Natural killer cell (primary cell): ENCODE measurements at regions of chr1 and their contacts with region 1.

Region 1: GRCh38 chr1:173824331-173825081 is at the starts of genes CENPL and DARS2:
- DNase-seq: peak; percentile 81 to 96
- ATAC-seq: peak; percentile 84 to 93 (median 88)
- H3K4me3 ChIP-seq: peak within 1 kb of the TSS; percentile 94
- H3K4me3 Mint-ChIP-seq: peak within 1 kb of the TSS; percentile 99
- H3K27ac ChIP-seq: peak within 1 kb of the TSS; percentile 85
- H3K27ac Mint-ChIP-seq: peak within 1 kb of the TSS; percentile 95 to 98
- H3K4me1 ChIP-seq: peaks cover 17% of the 10 kb centered on the region
- H3K4me1 Mint-ChIP-seq: peaks cover 27 to 38% of the 10 kb centered on the region in 2 donors
- H3K27me3 ChIP-seq: no peaks in the 10 kb centered on the region
- H3K27me3 Mint-ChIP-seq: no peaks in the 10 kb centered on the region
- CTCF ChIP-seq: no peak
- total RNA-seq, gene CENPL: 8.8 to 16.4 (median 10.0) TPM
- total RNA-seq, gene DARS2: 5.0 to 8.4 (median 5.8) TPM

Region 2: DNA sequence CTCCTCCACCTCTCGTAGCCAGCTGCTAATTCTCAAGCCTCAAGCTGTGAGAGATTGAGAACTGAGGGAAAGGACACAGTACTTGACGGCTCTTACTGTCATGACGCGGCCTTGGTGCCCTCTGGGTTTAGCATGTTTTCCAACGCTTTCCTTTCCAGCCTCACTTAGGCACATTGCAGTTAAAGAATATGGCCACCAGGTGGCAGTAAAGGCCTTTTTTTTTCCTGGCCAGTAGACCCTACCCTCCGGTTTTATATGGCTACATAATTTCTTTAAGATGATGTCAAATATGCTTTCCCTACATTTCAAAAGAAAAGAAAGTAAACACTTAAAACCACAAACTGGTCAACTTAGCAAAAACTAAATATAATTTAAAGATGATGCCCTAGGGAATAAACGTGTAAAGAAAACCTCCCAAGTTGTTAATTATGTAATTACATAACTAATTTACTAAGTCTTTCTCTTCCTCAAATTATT is 404.1 kb before region 1 on chr1:
- intact Hi-C with region 1: loop called (anchors 1 kb)
- DNase-seq: peak; percentile 43 to 87
- ATAC-seq: peak; percentile 82 to 94 (median 89)
- H3K4me3 ChIP-seq: no peak overlapping the region
- H3K4me3 Mint-ChIP-seq: peak overlapping the region; percentile 6
- H3K27ac ChIP-seq: no peak overlapping the region
- H3K27ac Mint-ChIP-seq: peak overlapping the region; percentile 34 to 69
- H3K4me1 ChIP-seq: peaks cover 7% of the 10 kb centered on the region
- H3K4me1 Mint-ChIP-seq: peaks cover 6 to 7% of the 10 kb centered on the region in 2 donors
- H3K27me3 ChIP-seq: no peaks in the 10 kb centered on the region
- H3K27me3 Mint-ChIP-seq: no peaks in the 10 kb centered on the region
- CTCF ChIP-seq: peak; percentile 91

Region 3: DNA sequence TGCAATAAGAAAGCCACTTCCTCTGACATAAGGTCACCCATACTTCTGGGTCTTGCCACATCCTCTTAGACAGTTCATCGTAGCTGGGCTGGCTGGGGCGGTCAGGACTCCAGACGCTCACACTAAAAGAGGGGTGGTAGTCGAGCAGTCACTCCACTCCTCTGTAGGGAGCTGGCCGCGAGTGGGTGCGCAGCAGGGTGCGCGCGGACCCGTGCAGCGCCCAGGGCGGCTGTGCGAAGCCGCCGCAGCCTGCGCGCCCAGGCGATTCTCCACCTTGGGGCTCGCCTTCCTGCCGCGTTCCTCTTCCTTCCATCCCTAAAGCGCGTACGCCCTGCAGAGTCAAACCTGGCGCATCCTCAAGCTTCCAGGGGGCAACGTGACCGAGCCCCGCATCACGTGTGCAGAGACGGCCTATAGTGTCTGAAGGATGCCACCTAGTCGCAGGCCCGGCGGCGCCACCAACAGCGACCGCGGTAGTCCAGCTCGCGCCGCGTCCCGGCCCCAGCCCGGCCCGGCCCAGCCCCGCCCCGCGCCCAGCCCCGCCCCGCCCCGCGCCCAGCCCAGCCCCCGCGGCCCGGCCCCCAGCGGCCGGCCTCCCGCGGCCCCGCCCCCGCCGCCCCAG is 347.7 kb before region 1 on chr1:
- intact Hi-C with region 1: loop called (anchors 1 kb)
- DNase-seq: peak; percentile 75 to 89
- ATAC-seq: peak; percentile 77 to 92 (median 85)
- H3K4me3 ChIP-seq: peak overlapping the region; percentile 85
- H3K4me3 Mint-ChIP-seq: peak overlapping the region; percentile 89
- H3K27ac ChIP-seq: peak overlapping the region; percentile 94
- H3K27ac Mint-ChIP-seq: peak overlapping the region; percentile 90 to 98
- H3K4me1 ChIP-seq: peaks cover 23% of the 10 kb centered on the region
- H3K4me1 Mint-ChIP-seq: peaks cover 58 to 69% of the 10 kb centered on the region in 2 donors
- H3K27me3 ChIP-seq: no peaks in the 10 kb centered on the region
- H3K27me3 Mint-ChIP-seq: no peaks in the 10 kb centered on the region
- CTCF ChIP-seq: no peak

Region 4: GRCh38 chr1:173714759-173715537 is 109.6 kb before region 1 on chr1 and contains the start of gene KLHL20:
- intact Hi-C with region 1: loop called (anchors 10 kb)
- DNase-seq: peak; percentile 68 to 93
- ATAC-seq: peak; percentile 92 to 97 (median 95)
- H3K4me3 ChIP-seq: peak within 1 kb of the TSS; percentile 99
- H3K4me3 Mint-ChIP-seq: peak within 1 kb of the TSS; percentile 96
- H3K27ac ChIP-seq: peak within 1 kb of the TSS; percentile 94
- H3K27ac Mint-ChIP-seq: peak within 1 kb of the TSS; percentile 95 to 96
- H3K4me1 ChIP-seq: no peaks in the 10 kb centered on the region
- H3K4me1 Mint-ChIP-seq: peaks cover 24 to 26% of the 10 kb centered on the region in 2 donors
- H3K27me3 ChIP-seq: peaks cover 3% of the 10 kb centered on the region
- H3K27me3 Mint-ChIP-seq: peaks cover 14 to 35% of the 10 kb centered on the region in 2 donors
- CTCF ChIP-seq: no peak
- total RNA-seq, gene KLHL20: 31.4 to 34.5 (median 33.1) TPM